ENCODE measurements at regions of chr11 and their contacts with region 1.

Region 1: DNA sequence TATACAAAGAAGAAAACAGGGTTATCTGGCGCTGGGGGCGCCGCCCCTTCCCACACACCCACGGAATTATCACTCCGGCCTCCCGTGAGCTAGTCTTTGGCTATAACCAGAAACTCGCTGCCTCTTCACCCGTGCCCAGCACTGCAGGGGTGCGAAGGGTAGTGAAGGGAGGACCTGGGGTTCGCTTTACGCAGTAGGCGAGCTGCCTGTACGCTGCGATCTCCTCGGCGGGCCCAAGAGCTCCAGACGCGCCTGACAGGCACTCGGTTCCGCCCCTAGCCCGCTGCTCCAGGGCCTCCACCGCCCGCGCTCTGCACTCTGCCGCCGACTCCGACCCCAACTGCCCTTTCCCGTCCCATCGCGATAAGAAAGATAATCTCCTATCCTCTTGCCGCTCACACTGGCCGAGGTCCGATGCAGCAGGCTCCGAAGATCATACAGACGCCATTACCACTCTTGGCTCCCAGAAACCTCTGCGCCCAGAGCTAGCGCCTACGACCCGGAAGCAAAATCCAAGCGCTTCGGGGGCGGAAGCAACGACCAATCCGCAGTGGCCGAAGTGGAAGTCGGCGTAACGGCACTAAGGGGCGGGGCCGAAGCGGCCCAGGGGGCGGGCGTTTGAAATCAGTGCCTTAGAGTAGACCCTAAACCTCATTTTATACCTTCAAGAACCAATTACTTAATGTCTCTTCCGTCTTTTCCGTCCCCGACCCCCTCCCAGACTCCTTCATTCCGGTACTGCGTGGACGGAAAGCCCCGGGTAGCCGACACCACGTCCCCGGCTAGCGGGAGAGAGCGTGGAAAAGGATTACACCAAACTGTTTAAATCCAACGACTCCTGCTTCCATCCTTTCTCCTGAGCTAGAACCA is at the starts of genes CWC15 and KDM4D:
- DNase-seq: peak; percentile 94 to 97 (median 95)
- ATAC-seq: peak; percentile 100
- H3K4me3 ChIP-seq: peak within 1 kb of the TSS; percentile 86
- H3K27ac ChIP-seq: peak within 1 kb of the TSS; percentile 83
- H3K4me1 ChIP-seq: peaks cover 0 to 8% of the 10 kb centered on the region in 2 experiments; a peak in 2 of 5 replicates
- H3K27me3 ChIP-seq: no peaks in the 10 kb centered on the region
- CTCF ChIP-seq: no peak
- EP300 ChIP-seq: peak; percentile 27; the same call in 1 of the 2 replicates
- POLR2A ChIP-seq: peak; percentile 95
- RAD21 ChIP-seq: no peak
- polyA plus RNA-seq, gene CWC15: 128 to 168 TPM
- polyA plus RNA-seq, gene KDM4D: 0.34 to 0.39 TPM

Region 2: DNA sequence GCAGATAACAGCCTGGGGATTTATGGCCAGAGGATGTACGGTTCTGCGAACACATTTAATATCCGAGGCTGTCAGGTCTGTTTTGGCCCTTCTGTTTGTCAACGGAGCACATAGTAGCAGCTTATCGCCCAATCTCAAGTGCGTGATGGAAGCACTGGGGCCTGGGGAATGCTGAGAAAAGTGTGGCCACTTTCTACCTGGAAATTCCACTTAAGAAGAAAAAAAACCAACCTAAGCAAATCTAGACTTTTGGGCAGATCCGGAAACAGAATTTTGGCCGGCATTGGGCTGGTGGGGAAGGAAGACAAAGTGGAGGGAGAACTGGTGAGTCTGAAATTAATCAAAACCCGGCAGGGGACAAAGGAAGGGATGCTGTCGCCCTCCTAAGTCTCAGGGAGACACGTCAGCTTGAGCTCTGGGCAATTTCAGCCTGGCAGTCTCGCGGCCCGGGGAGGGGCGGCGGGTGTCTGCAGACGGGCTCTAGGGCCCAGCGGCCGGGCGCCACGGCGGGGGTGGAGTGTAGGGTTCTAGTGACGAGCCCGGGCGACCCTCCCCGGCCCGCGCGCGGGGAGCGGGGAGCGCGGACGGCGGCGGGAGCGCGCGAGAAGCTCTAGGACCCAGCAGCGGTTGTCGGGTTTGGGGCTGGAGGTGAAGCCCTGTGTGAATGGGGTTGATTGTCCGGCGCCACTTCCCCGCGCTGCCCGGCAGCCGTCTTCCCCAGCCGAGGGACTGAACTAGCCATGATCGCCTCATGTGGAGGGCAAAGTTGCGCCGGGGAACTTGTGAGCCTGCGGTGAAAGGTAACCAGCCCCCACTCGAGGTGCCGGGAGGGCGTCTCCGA is 205.4 kb before region 1 on chr11 and contains the start of gene AMOTL1:
- CTCF ChIA-PET with region 1: no interaction called
- POLR2A ChIA-PET with region 1: no interaction called
- in situ Hi-C with region 1: no loop called
- intact Hi-C with region 1: loop called (anchors 10 kb)
- DNase-seq: peak; percentile 73 to 89 (median 74)
- ATAC-seq: peak; percentile 91
- H3K4me3 ChIP-seq: peak within 1 kb of the TSS; percentile 59
- H3K27ac ChIP-seq: peak within 1 kb of the TSS; percentile 87
- H3K4me1 ChIP-seq: peaks cover 20 to 25% of the 10 kb centered on the region in 2 experiments
- H3K27me3 ChIP-seq: no peaks in the 10 kb centered on the region; a peak in 1 of 5 replicates
- CTCF ChIP-seq: peak in 2 of 3 experiments; percentile 23 to 32; a peak in 3 of 6 replicates
- EP300 ChIP-seq: no peak
- POLR2A ChIP-seq: peak; percentile 70
- RAD21 ChIP-seq: peak; percentile 50 to 51
- polyA plus RNA-seq, gene AMOTL1: 4.0 to 4.7 TPM

Region 3: DNA sequence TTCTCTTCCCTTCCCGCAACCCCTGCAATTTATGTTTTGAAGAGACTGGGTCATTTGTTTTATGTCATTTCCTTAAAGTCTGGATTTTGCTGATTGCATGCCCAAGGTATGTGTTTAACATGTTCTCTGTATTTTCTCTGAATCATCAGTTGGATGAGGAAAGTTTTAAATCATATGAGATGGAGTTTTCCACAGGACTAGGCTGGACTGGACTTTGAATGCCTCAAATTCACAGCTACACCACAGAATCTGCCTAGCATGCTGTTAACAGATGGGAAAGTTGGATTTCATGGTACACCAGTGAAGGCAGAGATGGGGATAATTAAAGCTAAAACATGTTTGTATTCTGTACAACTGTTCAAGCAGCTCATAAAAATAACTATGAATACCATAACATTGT is 62.6 kb before region 1 on chr11:
- CTCF ChIA-PET with region 1: no interaction called
- POLR2A ChIA-PET with region 1: no interaction called
- in situ Hi-C with region 1: no loop called
- intact Hi-C with region 1: loop called (anchors 10 kb)
- DNase-seq: no peak
- ATAC-seq: no peak
- H3K4me3 ChIP-seq: no peak overlapping the region
- H3K27ac ChIP-seq: no peak overlapping the region
- H3K4me1 ChIP-seq: no peaks in the 10 kb centered on the region
- H3K27me3 ChIP-seq: no peaks in the 10 kb centered on the region
- CTCF ChIP-seq: no peak
- EP300 ChIP-seq: no peak
- POLR2A ChIP-seq: no peak
- RAD21 ChIP-seq: no peak

Region 4: DNA sequence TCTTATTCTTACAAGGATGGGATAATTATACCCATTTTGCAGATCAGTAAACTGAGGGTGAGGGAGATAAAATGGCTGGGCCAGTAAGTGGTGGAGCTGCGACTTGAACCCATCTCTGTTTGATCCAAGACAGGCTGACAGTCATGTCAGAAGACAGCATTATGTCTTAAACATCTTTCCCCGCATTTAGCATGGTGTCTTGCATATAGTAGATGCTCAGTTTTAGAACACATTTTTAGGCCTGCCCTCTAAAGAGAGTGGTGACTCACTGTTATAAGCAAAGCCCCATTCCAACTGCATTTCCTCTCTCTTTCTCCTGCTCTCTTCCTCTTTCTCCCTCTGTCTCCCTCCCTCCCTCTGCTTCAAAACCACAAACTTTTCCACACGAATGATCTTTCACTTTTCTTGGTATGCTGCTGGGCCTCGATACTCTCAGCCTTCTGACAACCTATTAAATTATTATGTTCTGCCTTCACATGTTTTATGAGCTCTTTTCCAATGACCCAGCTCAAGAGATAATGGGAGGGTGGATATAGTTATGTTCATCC is 25.2 kb before region 1 on chr11:
- CTCF ChIA-PET with region 1: no interaction called
- POLR2A ChIA-PET with region 1: no interaction called
- in situ Hi-C with region 1: no loop called
- intact Hi-C with region 1: no loop called
- DNase-seq: peak in 1 of 4 experiments; percentile 29
- ATAC-seq: no peak; the same call in 2 of the 3 replicates
- H3K4me3 ChIP-seq: no peak overlapping the region
- H3K27ac ChIP-seq: no peak overlapping the region
- H3K4me1 ChIP-seq: no peaks in the 10 kb centered on the region; a peak in 1 of 5 replicates
- H3K27me3 ChIP-seq: peaks cover 0 to 1% of the 10 kb centered on the region in 2 experiments; a peak in 2 of 5 replicates
- CTCF ChIP-seq: no peak
- EP300 ChIP-seq: no peak
- POLR2A ChIP-seq: no peak
- RAD21 ChIP-seq: 0 out of 4 replicates have a peak, but pooled peaks of 1 of the 2 experiments have one; percentile 13

Region 5: GRCh38 chr11:94959179-94959578 is 14.2 kb before region 1 on chr11:
- CTCF ChIA-PET with region 1: no interaction called
- POLR2A ChIA-PET with region 1: interaction called, 18 read pairs
- in situ Hi-C with region 1: no loop called
- intact Hi-C with region 1: no loop called
- DNase-seq: no peak
- ATAC-seq: no peak; the same call in 1 of the 3 replicates
- H3K4me3 ChIP-seq: no peak overlapping the region
- H3K27ac ChIP-seq: no peak overlapping the region
- H3K4me1 ChIP-seq: no peaks in the 10 kb centered on the region
- H3K27me3 ChIP-seq: no peaks in the 10 kb centered on the region
- CTCF ChIP-seq: no peak
- EP300 ChIP-seq: no peak
- POLR2A ChIP-seq: no peak
- RAD21 ChIP-seq: no peak

Region 6: GRCh38 chr11:95231127-95231880 is 258.0 kb after region 1 on chr11 and contains the start of gene SESN3:
- CTCF ChIA-PET with region 1: no interaction called
- POLR2A ChIA-PET with region 1: no interaction called
- in situ Hi-C with region 1: no loop called
- intact Hi-C with region 1: no loop called
- DNase-seq: peak; percentile 96 to 98 (median 97)
- ATAC-seq: peak; percentile 98
- H3K4me3 ChIP-seq: peak within 1 kb of the TSS; percentile 63
- H3K27ac ChIP-seq: peak within 1 kb of the TSS; percentile 65
- H3K4me1 ChIP-seq: peaks cover 4 to 14% of the 10 kb centered on the region in 2 experiments; a peak in 4 of 5 replicates
- H3K27me3 ChIP-seq: 0 out of 5 replicates have a peak, but pooled peaks cover 0 to 5% of the 10 kb centered on the region in 2 experiments
- CTCF ChIP-seq: no peak; a peak in 1 of 6 replicates
- EP300 ChIP-seq: no peak
- POLR2A ChIP-seq: no peak
- RAD21 ChIP-seq: peak in 1 of 2 experiments; percentile 27; a peak in 3 of 4 replicates
- polyA plus RNA-seq, gene SESN3: 0.44 to 0.48 TPM